ENCODE measurements at regions of chr15 and their contacts with region 1.

Region 1: DNA sequence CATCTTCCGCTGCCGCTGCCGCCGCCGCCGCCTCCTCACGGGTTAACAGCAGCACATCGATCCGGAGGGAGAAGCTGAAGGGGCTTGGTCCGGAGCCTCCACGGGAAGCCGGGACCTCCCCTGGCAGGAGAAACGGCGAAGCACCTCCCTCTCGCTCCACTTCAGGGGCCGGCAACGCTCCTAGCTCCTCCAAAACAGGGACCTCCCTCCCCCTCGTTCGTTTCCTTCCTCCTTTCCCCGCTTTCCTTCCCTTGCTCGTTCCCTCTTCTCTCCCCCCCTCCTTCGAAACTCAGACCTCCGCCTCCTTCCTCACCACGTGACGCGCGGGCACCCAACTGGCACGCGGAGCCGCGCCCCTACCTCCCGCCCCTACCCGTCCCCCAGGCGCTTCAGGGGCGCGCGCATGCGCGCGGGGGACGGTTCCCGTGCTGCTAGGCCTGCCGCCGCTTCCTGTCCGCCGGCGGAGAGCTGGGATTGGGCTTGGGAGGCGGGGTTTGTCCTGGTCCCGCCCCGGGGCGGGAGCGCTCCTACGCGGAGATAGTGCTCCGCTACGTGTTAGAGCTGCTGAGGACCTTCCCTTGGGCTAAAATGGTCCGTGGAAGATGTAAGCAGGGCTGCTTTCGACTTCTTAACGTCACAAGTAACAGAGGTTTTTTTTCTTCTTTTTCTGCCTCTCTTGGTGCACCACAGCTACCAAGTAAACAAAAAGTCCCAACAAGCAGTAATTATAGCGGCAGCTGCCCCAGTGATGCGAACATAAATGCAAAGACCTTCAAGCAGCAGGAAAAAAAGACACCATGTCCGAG is at the start of gene ADAM10:
- DNase-seq: peak; percentile 99
- H3K4me3 Mint-ChIP-seq: peak within 1 kb of the TSS; percentile 96
- H3K27ac Mint-ChIP-seq: peak within 1 kb of the TSS; percentile 90
- H3K4me1 Mint-ChIP-seq: peaks cover 24% of the 10 kb centered on the region
- H3K27me3 Mint-ChIP-seq: no peaks in the 10 kb centered on the region
- CTCF ChIP-seq: no peak
- total RNA-seq, gene ADAM10: 87.5 and 109 TPM in 2 replicates

Region 2: DNA sequence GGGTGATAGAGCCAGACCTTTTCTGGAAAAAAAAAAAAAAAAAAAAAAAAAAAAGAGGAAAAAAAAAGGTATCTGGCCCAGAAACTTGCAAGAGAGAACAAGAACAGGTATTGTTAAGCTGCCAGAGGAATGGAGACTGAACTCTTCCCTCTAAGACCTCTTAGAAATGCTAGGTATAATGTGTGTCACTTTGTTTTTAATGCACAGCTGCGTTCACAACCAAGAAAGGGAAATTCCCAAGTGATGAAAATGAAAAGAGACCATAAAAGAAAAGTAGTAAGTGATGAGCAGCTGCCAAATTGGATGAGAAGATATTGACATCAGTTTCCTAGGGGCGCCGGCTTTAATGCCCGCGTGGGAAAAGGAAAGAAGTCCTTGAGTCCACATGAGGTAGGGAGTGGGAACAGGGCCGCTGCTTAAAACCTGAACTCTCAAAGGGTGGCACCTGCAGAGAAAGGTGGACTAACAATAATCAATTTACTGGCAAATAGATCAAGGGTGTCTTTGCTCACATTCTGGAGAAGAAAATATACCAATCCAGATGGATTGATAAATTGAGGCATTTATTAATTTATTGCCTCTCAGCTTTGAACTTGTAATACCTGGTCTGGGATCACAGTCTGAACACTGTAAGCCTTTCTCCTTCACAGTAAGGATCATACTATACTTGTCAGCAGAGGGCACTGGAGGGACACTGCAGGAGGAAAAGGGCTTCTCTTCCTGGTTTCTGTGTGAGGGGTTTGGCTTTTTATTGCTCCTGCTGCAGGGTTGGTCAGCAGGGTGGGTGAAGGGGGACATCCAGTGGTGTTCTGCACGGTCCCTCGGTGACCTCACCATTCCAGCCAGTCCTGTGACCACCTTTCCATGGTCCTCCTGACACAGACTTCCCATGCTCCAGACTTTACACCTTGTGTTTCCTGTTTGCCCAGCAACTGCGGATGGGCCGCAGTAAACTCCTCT is 480.0 kb before region 1 on chr15:
- CTCF ChIA-PET with region 1: interaction called, 4 read pairs
- POLR2A ChIA-PET with region 1: interaction called, 6 read pairs
- intact Hi-C with region 1: loop called (anchors 1 kb)
- DNase-seq: peak; percentile 61
- H3K4me3 Mint-ChIP-seq: no peak overlapping the region
- H3K27ac Mint-ChIP-seq: peak overlapping the region; percentile 23
- H3K4me1 Mint-ChIP-seq: peaks cover 11% of the 10 kb centered on the region
- H3K27me3 Mint-ChIP-seq: no peaks in the 10 kb centered on the region
- CTCF ChIP-seq: peak; percentile 56

Region 3: GRCh38 chr15:58369261-58369701 is 380.5 kb before region 1 on chr15:
- CTCF ChIA-PET with region 1: no interaction called
- POLR2A ChIA-PET with region 1: no interaction called
- intact Hi-C with region 1: no loop called
- DNase-seq: no peak
- H3K4me3 Mint-ChIP-seq: no peak overlapping the region
- H3K27ac Mint-ChIP-seq: peak overlapping the region; percentile 7
- H3K4me1 Mint-ChIP-seq: no peaks in the 10 kb centered on the region
- H3K27me3 Mint-ChIP-seq: no peaks in the 10 kb centered on the region
- CTCF ChIP-seq: no peak

Region 4: GRCh38 chr15:58726867-58727266 is 22.9 kb before region 1 on chr15:
- CTCF ChIA-PET with region 1: interaction called, 3 read pairs
- POLR2A ChIA-PET with region 1: interaction called, 44 read pairs
- intact Hi-C with region 1: no loop called
- DNase-seq: no peak
- H3K4me3 Mint-ChIP-seq: no peak overlapping the region
- H3K27ac Mint-ChIP-seq: no peak overlapping the region
- H3K4me1 Mint-ChIP-seq: peaks cover 22% of the 10 kb centered on the region
- H3K27me3 Mint-ChIP-seq: no peaks in the 10 kb centered on the region
- CTCF ChIP-seq: no peak

Region 5: DNA sequence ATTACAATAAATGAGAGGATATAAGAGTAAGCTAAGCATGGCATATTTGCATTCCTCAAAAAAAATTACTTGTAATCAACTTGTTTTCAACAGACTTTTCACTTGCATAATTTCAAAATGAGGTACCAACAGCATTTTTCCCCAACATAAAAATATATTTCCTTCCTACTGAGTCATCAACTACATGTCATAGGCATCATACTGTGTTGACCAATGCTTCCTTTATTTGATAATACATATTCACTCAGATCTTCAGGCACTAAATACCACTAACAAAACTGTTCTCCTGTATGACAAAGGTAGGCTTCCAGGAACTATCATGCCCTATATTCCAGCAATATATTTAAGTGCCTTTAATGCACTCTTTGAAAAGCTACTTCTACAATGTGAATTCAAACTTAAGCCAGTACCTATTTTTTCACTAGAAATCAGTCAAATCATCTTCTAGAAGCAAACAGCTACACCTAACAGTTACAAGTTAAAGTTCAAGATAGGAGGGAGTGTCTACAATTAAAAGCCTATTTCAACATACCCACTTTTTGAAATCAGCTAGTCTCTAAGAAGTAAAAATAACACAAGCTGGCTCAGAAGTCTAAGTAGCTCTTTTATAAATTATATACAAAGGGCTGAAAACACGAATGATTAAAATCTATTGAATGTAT is 11.6 kb before region 1 on chr15:
- CTCF ChIA-PET with region 1: interaction called, 3 read pairs
- POLR2A ChIA-PET with region 1: interaction called, 119 read pairs
- intact Hi-C with region 1: no loop called
- DNase-seq: peak; percentile 36
- H3K4me3 Mint-ChIP-seq: no peak overlapping the region
- H3K27ac Mint-ChIP-seq: peak overlapping the region; percentile 53
- H3K4me1 Mint-ChIP-seq: peaks cover 32% of the 10 kb centered on the region
- H3K27me3 Mint-ChIP-seq: no peaks in the 10 kb centered on the region
- CTCF ChIP-seq: no peak

Region 6: GRCh38 chr15:58933281-58934113 is 183.8 kb after region 1 on chr15 and contains the start of gene SLTM:
- CTCF ChIA-PET with region 1: no interaction called
- POLR2A ChIA-PET with region 1: interaction called, 20 read pairs
- intact Hi-C with region 1: loop called (anchors 5 kb)
- DNase-seq: peak; percentile 91
- H3K4me3 Mint-ChIP-seq: peak within 1 kb of the TSS; percentile 92
- H3K27ac Mint-ChIP-seq: peak within 1 kb of the TSS; percentile 99
- H3K4me1 Mint-ChIP-seq: peaks cover 11% of the 10 kb centered on the region
- H3K27me3 Mint-ChIP-seq: no peaks in the 10 kb centered on the region
- CTCF ChIP-seq: no peak
- total RNA-seq, gene SLTM: 108 and 117 TPM in 2 replicates